Motor neuron (in vitro differentiated cells): ENCODE measurements at regions of chr14 and their contacts with region 1.

Region 1: GRCh38 chr14:77547512-77548180 is 49.0 kb upstream of the ISM2 start:
- ATAC-seq: no peak
- H3K4me3 ChIP-seq: no peak overlapping the region
- H3K27ac ChIP-seq: no peak overlapping the region
- H3K4me1 ChIP-seq: peaks cover 0 to 3% of the 10 kb centered on the region in 2 donors

Region 2: DNA sequence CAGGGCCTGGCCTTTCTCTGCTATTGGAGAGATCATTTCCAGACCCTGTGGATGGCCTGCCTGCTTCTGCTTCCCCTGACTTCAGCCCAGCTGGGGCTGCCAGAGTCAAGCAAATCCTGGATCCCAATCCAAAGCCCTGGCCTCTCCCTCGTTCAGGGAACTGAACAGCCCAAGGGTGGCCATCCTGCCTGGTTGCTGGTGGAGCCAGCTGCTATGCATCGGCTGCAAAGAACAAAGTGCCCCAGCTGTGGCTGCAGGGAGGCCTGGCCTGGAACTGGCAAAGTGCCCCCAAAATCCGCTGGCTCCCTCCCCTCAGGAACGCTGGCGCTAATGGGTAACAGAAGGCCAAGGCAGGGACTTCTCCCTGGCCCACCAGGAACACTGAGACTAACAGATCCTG is 665.0 kb before region 1 on chr14:
- in situ Hi-C with region 1: no loop called
- ATAC-seq: peak in 2 of 8 experiments; percentile 51 to 91
- H3K4me3 ChIP-seq: no peak overlapping the region
- H3K27ac ChIP-seq: no peak overlapping the region
- H3K4me1 ChIP-seq: peaks cover 0 to 4% of the 10 kb centered on the region in 2 donors

Region 3: GRCh38 chr14:77212943-77213678 is 334.5 kb before region 1 on chr14:
- in situ Hi-C with region 1: no loop called
- ATAC-seq: peak; percentile 68 to 91 (median 78)
- H3K4me3 ChIP-seq: no peak overlapping the region
- H3K27ac ChIP-seq: no peak overlapping the region
- H3K4me1 ChIP-seq: peaks cover 15 to 20% of the 10 kb centered on the region in 2 donors

Region 4: GRCh38 chr14:77457522-77458290 is 89.9 kb before region 1 on chr14 and contains the starts of genes AHSA1 and VIPAS39:
- in situ Hi-C with region 1: loop called in 1 of 9 experiments (anchors 5 kb)
- ATAC-seq: peak; percentile 89 to 96 (median 95)
- H3K4me3 ChIP-seq: peak within 1 kb of the TSS; percentile 55 to 90 (median 64)
- H3K27ac ChIP-seq: peak within 1 kb of the TSS; percentile 96
- H3K4me1 ChIP-seq: peaks cover 8 to 10% of the 10 kb centered on the region in 2 donors
- total RNA-seq, gene AHSA1: 76.3 to 203 (median 126) TPM
- total RNA-seq, gene VIPAS39: 17.5 to 33.8 (median 25.7) TPM